Activated CD4-positive, alpha-beta T cell treated with anti-CD3 and anti-CD28 coated beads for 36 hours (primary cell): ENCODE measurements at regions of chr11 and their contacts with region 1.

Region 1: DNA sequence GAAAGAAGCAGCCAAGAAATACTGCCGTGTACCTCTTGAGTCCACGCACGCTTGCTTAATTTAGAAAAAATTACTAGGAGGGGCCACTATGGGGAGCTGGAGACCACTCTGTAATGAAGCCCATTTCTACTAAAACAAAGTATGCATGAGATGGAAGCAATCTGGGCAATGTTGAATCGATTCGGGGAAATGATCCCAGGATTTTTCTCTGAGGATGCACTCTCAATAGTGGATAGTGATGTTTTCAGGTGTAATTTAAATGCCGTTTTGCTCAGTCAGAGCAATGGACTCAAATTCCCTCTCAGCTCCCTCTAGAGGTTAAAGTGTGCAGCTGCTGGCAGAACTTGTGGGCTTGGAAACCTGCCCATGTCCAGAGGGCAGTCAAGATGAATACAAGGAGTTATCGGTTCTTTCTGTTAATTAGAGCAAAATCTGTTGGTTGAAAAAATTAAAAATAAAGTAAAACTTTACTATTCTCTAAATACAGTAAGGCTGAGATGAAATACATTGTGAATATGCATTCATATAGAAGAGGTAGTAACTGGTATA is 64.1 kb downstream of the ME3 start:
- DNase-seq: peak; percentile 68
- ATAC-seq: peak; percentile 87
- H3K4me3 Mint-ChIP-seq: no peak overlapping the region
- H3K27ac Mint-ChIP-seq: no peak overlapping the region
- H3K4me1 Mint-ChIP-seq: peaks cover 17% of the 10 kb centered on the region
- H3K27me3 Mint-ChIP-seq: no peaks in the 10 kb centered on the region

Region 2: DNA sequence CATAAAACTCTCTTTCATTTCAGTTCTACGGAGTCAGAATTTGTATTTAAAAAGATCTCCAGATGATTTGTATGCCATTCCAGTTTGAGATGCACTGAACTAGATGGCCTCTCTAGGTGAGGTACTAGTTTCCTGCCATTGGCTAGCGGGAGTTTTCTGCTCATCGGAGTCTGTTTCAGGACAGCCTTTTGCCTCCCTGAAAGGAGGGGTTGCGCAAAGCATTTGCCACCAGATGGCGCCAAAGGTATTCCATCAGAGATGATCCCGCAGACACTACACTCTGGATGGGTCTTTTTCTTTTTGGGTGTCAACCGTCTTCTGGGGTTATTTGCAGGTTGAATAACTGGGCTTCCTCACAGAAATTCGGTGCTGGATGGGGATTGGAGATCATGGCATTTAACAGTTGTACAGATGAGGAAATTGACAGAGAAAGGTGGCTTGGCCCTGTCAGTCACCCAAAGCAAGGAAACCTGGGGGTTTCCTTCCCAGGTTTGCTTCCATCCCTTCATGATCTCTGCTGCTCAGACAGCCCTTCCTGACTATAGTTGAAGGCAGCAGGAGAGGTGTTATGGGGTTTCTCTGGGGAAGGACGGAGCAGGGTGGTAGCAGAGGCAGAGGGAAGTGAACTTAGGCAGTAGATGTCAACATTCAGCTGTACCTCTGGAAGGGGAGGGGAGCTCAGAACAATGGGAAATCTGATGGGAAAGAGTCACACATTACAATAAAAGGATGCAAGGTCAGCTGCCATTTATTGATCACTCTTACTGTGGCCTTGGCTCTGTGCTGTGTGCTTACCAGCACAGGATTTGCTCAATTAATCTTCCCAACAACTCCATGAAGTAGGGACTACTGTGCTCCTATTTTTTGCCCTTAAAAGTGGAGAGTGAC is 152.0 kb before region 1 on chr11:
- CTCF ChIA-PET with region 1: interaction called, 17 read pairs
- POLR2A ChIA-PET with region 1: no interaction called
- intact Hi-C with region 1: loop called (anchors 1 kb)
- DNase-seq: peak; percentile 93
- ATAC-seq: peak; percentile 92
- H3K4me3 Mint-ChIP-seq: no peak overlapping the region
- H3K27ac Mint-ChIP-seq: no peak overlapping the region
- H3K4me1 Mint-ChIP-seq: peaks cover 21% of the 10 kb centered on the region
- H3K27me3 Mint-ChIP-seq: no peaks in the 10 kb centered on the region

Region 3: DNA sequence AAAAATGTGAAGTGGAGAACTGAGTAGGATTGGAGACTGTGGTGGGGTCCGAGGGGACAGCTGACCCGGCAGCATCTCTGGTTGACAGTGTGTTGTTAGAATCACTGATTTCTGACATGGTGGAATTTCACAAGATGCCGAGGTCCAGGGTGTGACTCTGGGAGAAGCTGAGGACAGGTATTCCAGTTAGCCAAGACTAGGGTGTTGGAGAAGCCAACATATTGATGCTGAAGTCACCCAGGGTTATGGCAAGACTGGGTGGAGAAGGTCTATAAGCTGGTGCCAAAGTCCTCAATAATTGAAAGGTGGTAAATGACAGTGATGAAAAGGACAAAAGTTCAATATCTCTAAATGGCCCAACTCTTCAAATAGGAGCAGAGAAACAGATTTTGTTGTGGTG is 22.0 kb before region 1 on chr11:
- CTCF ChIA-PET with region 1: interaction called, 13 read pairs
- POLR2A ChIA-PET with region 1: no interaction called
- intact Hi-C with region 1: no loop called
- DNase-seq: no peak
- ATAC-seq: no peak
- H3K4me3 Mint-ChIP-seq: no peak overlapping the region
- H3K27ac Mint-ChIP-seq: no peak overlapping the region
- H3K4me1 Mint-ChIP-seq: peaks cover 26% of the 10 kb centered on the region
- H3K27me3 Mint-ChIP-seq: no peaks in the 10 kb centered on the region

Region 4: DNA sequence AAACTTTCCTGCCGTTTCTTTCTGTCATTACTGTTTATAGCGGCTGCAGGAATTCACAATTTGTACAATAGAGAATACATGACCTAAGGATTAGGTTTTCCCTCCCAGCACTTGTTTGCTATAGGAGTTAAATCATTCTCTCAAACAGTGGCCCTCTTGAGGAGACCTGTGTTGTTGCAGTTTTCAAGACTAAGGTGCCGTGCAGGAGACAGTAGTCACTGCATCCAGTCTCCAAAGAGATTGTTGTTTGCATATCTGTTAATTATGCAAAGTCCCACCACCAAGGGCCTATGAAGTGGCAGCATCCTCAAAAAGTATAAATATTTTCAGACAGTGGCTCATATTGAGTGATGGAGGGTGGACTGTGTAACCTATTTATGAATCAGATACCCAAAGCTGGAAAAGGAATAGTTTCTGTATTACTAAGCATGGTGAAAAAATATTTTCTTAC is 194.3 kb after region 1 on chr11:
- CTCF ChIA-PET with region 1: interaction called, 15 read pairs
- POLR2A ChIA-PET with region 1: no interaction called
- intact Hi-C with region 1: no loop called
- DNase-seq: peak; percentile 39
- ATAC-seq: peak; percentile 34
- H3K4me3 Mint-ChIP-seq: no peak overlapping the region
- H3K27ac Mint-ChIP-seq: no peak overlapping the region
- H3K4me1 Mint-ChIP-seq: peaks cover 62% of the 10 kb centered on the region
- H3K27me3 Mint-ChIP-seq: peaks cover 55% of the 10 kb centered on the region